ENCODE measurements at regions of chr2 and their contacts with region 1.

Region 1: DNA sequence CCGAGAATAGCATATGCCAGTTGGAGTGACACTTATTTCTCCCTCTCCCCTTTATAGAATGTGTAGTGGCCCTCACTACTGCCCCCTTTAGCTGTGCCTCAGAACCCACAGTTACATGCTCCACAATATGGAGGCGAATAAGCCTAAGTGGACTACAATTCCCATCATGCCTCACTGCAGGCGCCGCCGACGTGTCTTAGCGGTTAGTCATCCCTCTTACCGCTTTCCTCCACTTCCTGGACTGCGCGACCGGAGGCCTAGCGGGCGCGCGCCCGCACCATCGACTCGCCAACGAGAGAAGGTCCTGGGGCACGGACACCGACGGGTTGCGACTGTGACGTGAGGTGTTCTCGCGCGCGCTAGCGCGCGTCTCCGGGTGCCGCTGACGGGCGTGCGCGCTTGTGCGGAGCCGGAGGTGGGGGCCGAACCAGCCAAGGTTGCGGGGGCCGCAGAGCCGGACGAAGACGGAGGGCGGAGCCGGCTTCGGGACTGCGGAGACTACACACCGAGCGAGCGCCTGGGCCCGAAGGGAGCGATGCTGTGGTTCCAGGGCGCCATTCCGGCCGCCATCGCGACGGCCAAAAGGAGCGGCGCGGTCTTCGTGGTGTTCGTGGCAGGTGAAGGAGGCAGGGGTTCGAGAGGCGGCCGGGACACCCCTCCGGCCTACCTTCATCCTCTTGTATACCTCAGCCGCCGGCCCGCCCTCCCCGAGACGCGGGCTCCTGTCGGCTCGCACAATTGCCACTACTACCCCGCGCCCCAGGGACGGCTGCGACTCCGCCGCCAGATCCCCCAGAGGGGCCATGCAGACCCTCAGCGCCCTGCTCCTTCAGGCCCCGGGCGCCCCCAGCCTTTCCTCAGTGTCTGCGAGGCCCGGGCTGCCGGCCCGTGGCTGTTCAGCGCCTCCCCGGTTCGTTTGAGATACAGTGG is at the start of gene UBXN4:
- DNase-seq: peak; percentile 98
- H3K4me3 Mint-ChIP-seq: peak within 1 kb of the TSS; percentile 96
- H3K27ac Mint-ChIP-seq: peak within 1 kb of the TSS; percentile 99
- H3K4me1 Mint-ChIP-seq: peaks cover 24% of the 10 kb centered on the region
- H3K27me3 Mint-ChIP-seq: no peaks in the 10 kb centered on the region
- total RNA-seq, gene UBXN4: 107 TPM

Region 2: GRCh38 chr2:135792401-135793150 is 50.9 kb after region 1 on chr2:
- CTCF ChIA-PET with region 1: interaction called, 30 read pairs
- POLR2A ChIA-PET with region 1: no interaction called
- intact Hi-C with region 1: loop called (anchors 2 kb)
- DNase-seq: peak; percentile 55
- H3K4me3 Mint-ChIP-seq: no peak overlapping the region
- H3K27ac Mint-ChIP-seq: no peak overlapping the region
- H3K4me1 Mint-ChIP-seq: peaks cover 18% of the 10 kb centered on the region
- H3K27me3 Mint-ChIP-seq: no peaks in the 10 kb centered on the region

Region 3: GRCh38 chr2:135876066-135876711 is 134.5 kb after region 1 on chr2 and contains the start of gene MCM6:
- CTCF ChIA-PET with region 1: interaction called, 3 read pairs
- POLR2A ChIA-PET with region 1: interaction called, 5 read pairs
- intact Hi-C with region 1: loop called (anchors 2 kb)
- DNase-seq: peak; percentile 100
- H3K4me3 Mint-ChIP-seq: peak within 1 kb of the TSS; percentile 90
- H3K27ac Mint-ChIP-seq: peak within 1 kb of the TSS; percentile 98
- H3K4me1 Mint-ChIP-seq: peaks cover 39% of the 10 kb centered on the region
- H3K27me3 Mint-ChIP-seq: peaks cover 2% of the 10 kb centered on the region
- total RNA-seq, gene MCM6: 280 to 284 TPM

Region 4: DNA sequence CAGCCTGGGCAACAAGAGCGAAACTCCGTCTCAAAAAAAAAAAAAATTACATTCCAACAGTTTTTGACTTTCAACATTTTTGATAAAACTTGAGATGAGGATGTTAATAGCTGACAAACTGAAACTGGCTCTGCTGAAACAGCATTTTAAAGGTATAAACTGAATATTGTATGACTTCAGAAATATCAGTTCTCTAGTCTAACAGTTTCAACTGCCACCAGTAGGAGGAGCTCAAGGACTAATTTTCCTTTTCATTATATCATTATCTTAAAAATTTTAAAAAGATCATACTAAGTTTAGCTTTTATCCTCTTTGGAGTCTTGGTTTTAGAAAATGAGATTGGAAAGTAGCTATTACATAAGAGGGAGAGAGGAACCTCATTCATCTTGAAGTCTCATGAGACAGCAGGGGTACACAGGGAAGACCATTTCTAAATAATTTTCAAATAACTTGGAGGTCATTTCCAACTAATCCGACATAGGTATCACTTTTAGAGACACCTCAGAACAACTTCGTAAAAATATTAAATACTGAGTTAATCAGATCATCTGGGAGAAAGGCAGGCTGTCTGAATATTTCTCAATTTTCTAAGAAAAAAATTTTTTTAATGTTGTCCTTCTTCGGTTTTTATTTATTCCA is 172.2 kb after region 1 on chr2:
- CTCF ChIA-PET with region 1: no interaction called
- POLR2A ChIA-PET with region 1: no interaction called
- intact Hi-C with region 1: no loop called
- DNase-seq: no peak
- H3K4me3 Mint-ChIP-seq: no peak overlapping the region
- H3K27ac Mint-ChIP-seq: no peak overlapping the region
- H3K4me1 Mint-ChIP-seq: peaks cover 14% of the 10 kb centered on the region
- H3K27me3 Mint-ChIP-seq: no peaks in the 10 kb centered on the region

Measured in activated CD4-positive, alpha-beta memory T cell treated with anti-CD3 and anti-CD28 coated beads for 36 hours (primary cell).